MCF 10A (cell line): ENCODE measurements at regions of chr4 and their contacts with region 1.

Region 1: DNA sequence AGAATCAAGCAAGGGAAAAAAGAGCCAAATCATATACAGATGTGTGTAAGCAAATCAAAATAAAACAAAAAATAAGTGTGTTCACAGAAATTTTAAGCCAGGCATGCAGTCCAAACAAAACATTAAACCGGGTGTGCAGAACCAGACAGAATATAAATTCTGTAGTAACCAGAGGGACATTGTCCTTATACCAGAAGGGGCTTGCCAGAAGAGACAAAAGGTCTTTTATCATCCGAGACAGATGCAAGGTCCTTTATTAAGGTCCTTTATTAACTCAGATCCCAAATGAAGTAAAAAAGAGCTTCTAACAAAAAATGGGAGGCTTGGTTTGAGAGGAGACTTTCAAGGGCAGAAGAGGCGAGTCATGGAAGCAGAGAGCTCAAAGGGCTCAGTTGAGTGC is 59.2 kb downstream of the RGS12 start:
- DNase-seq: no peak
- H3K4me3 Mint-ChIP-seq: no peak overlapping the region
- H3K27ac Mint-ChIP-seq: no peak overlapping the region
- H3K4me1 Mint-ChIP-seq: no peaks in the 10 kb centered on the region
- H3K27me3 Mint-ChIP-seq: no peaks in the 10 kb centered on the region
- CTCF ChIP-seq: no peak

Region 2: DNA sequence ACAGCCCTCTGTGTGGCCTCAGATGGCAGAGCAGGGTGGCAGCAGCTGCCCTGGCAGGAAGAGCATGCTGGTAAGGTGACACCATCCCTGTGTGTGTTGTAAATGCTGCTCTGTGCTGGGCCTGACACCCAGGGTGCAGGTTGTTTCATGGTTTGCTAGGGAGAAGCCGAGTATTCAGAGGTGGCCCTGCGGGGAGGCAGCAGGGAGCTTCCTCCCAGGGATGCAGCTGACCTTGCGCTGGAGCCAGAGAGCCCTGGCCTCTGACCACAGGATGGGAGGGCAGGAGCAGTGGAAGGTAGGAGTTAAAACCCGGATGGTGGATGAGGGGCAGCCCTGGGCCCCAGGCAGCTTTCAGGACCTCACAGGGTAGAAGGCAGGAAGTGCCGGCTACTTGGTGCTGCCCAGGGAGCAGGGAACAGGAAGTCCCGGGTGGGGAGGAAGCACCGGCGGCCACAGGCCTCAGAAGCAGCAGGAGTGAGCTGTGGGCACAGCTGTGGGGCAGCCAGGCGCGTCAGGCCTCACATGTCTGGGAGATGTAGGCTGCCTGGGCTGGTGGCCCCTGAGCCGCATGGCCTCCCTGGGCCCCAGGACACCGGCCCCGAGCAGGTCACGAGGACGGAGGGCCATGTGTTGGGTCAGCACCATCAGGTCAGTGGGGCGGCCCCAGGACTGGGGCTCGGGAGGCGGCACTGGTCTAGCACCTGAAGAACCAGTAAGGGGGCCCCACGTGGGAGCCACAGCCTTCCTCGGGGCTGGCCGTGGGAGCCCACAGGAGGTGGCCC is 540.0 kb before region 1 on chr4:
- CTCF ChIA-PET with region 1: no interaction called
- POLR2A ChIA-PET with region 1: no interaction called
- intact Hi-C with region 1: no loop called
- DNase-seq: no peak
- H3K4me3 Mint-ChIP-seq: no peak overlapping the region
- H3K27ac Mint-ChIP-seq: peak overlapping the region; percentile 59
- H3K4me1 Mint-ChIP-seq: peaks cover 13% of the 10 kb centered on the region
- H3K27me3 Mint-ChIP-seq: no peaks in the 10 kb centered on the region
- CTCF ChIP-seq: no peak

Region 3: DNA sequence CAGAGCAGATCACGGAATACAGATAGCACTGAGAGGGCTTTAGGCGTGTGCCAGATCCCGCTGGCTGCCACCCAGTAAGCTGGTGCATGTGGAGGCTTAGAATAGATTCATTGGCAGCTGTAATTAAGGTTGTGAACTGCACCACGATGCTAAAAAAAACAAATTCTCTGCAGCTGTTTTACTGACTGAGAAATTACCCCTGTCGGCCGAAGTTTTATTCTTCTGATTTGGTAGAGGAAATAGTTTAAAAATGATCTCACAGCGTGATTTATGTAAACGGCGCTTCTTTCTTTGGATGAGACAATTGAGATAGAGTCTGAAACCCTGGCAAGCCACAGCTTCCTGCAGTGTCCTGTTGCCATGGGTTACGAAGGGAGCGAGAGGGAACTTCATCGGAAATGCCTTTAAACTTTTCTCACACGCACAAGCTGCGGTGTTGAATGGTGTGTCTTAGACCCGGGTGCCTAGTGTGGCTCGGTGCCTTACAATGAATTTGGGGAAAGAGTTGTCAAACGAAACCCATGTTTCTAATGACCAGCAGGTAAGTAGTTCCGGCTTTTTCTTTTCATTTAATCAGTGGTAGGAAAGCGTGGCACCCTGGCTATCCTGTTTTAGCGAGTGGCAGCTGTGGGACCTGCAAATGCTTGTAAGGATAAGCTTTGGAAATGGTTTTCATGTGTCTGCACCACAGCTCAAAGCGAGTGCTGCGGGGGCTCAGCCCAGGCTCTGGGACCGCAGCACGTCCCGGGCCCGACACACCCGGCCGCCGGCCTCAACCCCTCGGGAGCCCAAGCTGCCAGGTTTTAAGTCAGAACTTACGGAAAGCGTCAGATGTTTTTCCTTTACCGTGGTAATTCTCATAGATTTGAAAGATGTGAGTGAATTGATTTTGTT is 18.1 kb after region 1 on chr4:
- CTCF ChIA-PET with region 1: no interaction called
- POLR2A ChIA-PET with region 1: no interaction called
- intact Hi-C with region 1: no loop called
- DNase-seq: peak; percentile 8
- H3K4me3 Mint-ChIP-seq: peak overlapping the region; percentile 12
- H3K27ac Mint-ChIP-seq: no peak overlapping the region
- H3K4me1 Mint-ChIP-seq: peaks cover 7% of the 10 kb centered on the region
- H3K27me3 Mint-ChIP-seq: peaks cover 10% of the 10 kb centered on the region
- CTCF ChIP-seq: no peak

Region 4: GRCh38 chr4:3442959-3443749 is 91.2 kb after region 1 on chr4:
- CTCF ChIA-PET with region 1: interaction called, 13 read pairs
- POLR2A ChIA-PET with region 1: interaction called, 5 read pairs
- intact Hi-C with region 1: no loop called
- DNase-seq: peak; percentile 56
- H3K4me3 Mint-ChIP-seq: no peak overlapping the region
- H3K27ac Mint-ChIP-seq: no peak overlapping the region
- H3K4me1 Mint-ChIP-seq: peaks cover 10% of the 10 kb centered on the region
- H3K27me3 Mint-ChIP-seq: no peaks in the 10 kb centered on the region
- CTCF ChIP-seq: peak; percentile 97